ENCODE measurements at regions of chr6 and their contacts with region 1.

Region 1: DNA sequence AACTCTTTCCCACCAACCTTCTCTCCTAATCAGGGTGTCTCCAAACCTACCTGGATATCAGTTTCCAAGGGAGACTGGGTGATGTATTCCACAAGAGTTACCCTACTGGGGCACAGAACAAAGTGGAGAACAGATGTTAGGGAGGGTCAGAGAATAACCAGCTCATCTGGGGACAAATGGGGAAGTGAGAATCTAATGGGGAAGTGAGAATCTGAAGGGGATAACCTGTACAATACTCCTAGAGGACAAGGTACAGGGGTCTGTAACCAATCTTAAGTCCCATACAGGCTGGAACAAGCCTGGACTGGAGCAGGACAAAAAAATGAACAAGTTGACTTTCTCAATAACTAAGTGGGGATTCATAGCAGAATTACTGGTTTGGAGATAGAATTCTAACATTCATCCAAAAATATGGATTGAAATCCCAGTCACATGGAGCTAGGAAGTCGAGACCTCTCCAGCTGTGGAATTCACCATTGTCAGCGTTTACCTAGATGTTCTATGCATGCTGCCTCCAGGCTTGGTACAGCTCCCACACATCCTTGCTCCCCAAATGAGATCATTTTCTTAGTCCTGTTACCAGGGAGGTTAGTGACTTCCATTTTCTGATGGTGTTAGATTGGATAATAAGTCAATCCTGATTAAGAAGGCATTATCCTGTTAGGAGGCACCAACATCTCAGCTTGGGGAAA is 214.8 kb upstream of the MOCS1 start:
- DNase-seq: peak; percentile 88
- ATAC-seq: peak; percentile 97
- H3K4me3 ChIP-seq: no peak overlapping the region
- H3K27ac ChIP-seq: peak overlapping the region; percentile 60
- H3K4me1 ChIP-seq: peaks cover 11% of the 10 kb centered on the region
- H3K27me3 ChIP-seq: no peaks in the 10 kb centered on the region
- CTCF ChIP-seq: no peak
- EP300 ChIP-seq: peak; percentile 94 to 100
- POLR2A ChIP-seq: no peak
- RAD21 ChIP-seq: no peak

Region 2: DNA sequence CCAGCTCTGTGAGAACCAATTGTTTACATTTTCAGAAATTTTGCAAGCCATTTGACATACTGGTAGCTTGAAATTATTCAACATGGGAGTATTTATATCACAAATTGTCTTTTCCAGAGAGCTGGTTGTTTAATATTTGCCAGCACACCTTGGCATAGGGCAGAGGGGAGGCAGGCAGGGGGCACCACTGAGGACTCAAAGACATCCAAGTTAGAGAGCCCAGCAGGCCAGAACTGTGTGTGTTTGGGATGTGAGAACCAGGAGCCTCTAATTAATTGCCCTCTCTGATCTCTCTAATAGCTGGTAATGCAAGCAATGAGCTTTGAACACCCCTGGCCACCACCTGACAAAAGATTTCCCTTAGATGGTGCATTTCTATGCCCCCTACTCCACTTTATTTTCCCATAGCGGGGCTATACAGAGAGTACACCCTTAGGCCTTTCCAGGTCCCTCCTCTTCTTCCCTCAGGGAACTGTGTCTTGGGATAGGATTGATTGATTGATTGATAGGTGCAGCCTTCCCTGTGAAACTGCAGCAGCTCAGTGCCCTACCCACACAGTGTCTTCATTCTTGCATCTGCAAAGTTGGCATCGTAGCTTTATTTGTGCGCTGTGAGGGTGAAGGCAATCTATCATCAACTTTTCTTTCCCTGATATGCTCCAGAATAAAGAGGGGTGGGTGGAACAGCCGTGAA is 243.9 kb before region 1 on chr6:
- CTCF ChIA-PET with region 1: no interaction called
- POLR2A ChIA-PET with region 1: no interaction called
- RAD21 ChIA-PET with region 1: no interaction called
- SMC1A ChIA-PET with region 1: no interaction called
- in situ Hi-C with region 1: no loop called
- intact Hi-C with region 1: no loop called
- DNase-seq: no peak
- ATAC-seq: no peak
- H3K4me3 ChIP-seq: no peak overlapping the region
- H3K27ac ChIP-seq: no peak overlapping the region
- H3K4me1 ChIP-seq: no peaks in the 10 kb centered on the region
- H3K27me3 ChIP-seq: peaks cover 0 to 1% of the 10 kb centered on the region in 2 experiments; a peak in 1 of 4 replicates
- CTCF ChIP-seq: no peak
- EP300 ChIP-seq: no peak
- POLR2A ChIP-seq: no peak
- RAD21 ChIP-seq: no peak

Region 3: GRCh38 chr6:39980839-39981580 is 168.0 kb before region 1 on chr6:
- CTCF ChIA-PET with region 1: interaction called, 9 read pairs
- POLR2A ChIA-PET with region 1: interaction called, 3 read pairs
- RAD21 ChIA-PET with region 1: interaction called, 11 read pairs
- SMC1A ChIA-PET with region 1: interaction called, 6 read pairs
- in situ Hi-C with region 1: no loop called
- intact Hi-C with region 1: no loop called
- DNase-seq: no peak
- ATAC-seq: peak; percentile 79
- H3K4me3 ChIP-seq: no peak overlapping the region
- H3K27ac ChIP-seq: no peak overlapping the region
- H3K4me1 ChIP-seq: no peaks in the 10 kb centered on the region
- H3K27me3 ChIP-seq: no peaks in the 10 kb centered on the region; a peak in 1 of 4 replicates
- CTCF ChIP-seq: peak; percentile 22 to 68 (median 30); a peak in 4 of 6 replicates
- EP300 ChIP-seq: no peak
- POLR2A ChIP-seq: no peak
- RAD21 ChIP-seq: peak; percentile 62

Region 4: GRCh38 chr6:40097590-40097989 is 51.4 kb before region 1 on chr6:
- CTCF ChIA-PET with region 1: no interaction called
- POLR2A ChIA-PET with region 1: no interaction called
- RAD21 ChIA-PET with region 1: interaction called, 3 read pairs
- SMC1A ChIA-PET with region 1: interaction called, 29 read pairs
- in situ Hi-C with region 1: no loop called
- intact Hi-C with region 1: no loop called
- DNase-seq: no peak
- ATAC-seq: no peak; the same call in 2 of the 3 replicates
- H3K4me3 ChIP-seq: no peak overlapping the region
- H3K27ac ChIP-seq: no peak overlapping the region
- H3K4me1 ChIP-seq: no peaks in the 10 kb centered on the region
- H3K27me3 ChIP-seq: no peaks in the 10 kb centered on the region
- CTCF ChIP-seq: no peak
- EP300 ChIP-seq: no peak
- POLR2A ChIP-seq: no peak
- RAD21 ChIP-seq: no peak

Region 5: DNA sequence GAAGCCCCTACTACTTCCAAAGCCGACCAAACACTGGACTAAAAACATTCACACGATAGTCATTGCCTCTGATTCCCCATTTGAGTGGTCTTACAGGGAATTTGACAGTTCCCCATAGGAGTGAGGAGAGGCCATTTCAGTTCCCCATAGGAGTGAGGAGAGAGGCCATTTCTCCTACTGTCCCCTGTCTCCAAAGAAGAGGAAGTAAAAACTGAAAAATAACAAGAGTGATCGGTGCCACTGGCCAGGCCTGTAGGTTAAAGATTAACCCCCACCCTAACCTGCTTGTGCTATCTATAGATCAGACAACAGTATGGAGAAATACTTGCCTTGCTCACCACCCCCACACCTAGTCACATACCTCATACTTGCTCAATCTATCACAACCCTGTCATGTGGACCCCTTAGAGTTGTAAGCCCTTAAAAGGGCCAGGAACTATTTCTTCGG is 10.7 kb before region 1 on chr6:
- CTCF ChIA-PET with region 1: interaction called, 26 read pairs
- POLR2A ChIA-PET with region 1: interaction called, 22 read pairs
- RAD21 ChIA-PET with region 1: interaction called, 58 read pairs
- SMC1A ChIA-PET with region 1: interaction called, 70 read pairs
- in situ Hi-C with region 1: no loop called
- intact Hi-C with region 1: no loop called
- DNase-seq: peak; percentile 27
- ATAC-seq: peak; percentile 82
- H3K4me3 ChIP-seq: no peak overlapping the region
- H3K27ac ChIP-seq: no peak overlapping the region
- H3K4me1 ChIP-seq: no peaks in the 10 kb centered on the region
- H3K27me3 ChIP-seq: no peaks in the 10 kb centered on the region
- CTCF ChIP-seq: no peak
- EP300 ChIP-seq: 0 out of 4 replicates have a peak, but pooled peaks of 1 of the 2 experiments have one; percentile 41
- POLR2A ChIP-seq: no peak
- RAD21 ChIP-seq: no peak

Region 6: DNA sequence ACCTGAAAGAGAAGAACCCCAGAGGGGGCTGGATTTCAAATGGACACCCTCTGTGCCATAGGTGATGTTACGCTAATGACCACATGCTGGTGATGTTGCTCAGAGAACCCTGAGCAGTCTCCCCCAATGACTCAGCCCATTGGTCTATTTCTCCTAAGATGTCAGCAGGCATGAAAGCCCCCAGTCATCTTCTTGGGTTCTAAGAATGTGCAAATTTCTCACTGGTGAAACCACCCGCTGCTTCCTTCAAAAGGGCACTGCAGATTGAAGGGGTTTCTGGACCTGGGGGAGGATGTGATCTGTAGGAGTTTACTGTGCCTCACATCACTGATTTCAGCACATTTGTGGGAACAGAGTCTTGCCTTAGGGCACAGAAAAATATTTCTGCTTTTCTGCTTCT is 83.7 kb after region 1 on chr6:
- CTCF ChIA-PET with region 1: no interaction called
- POLR2A ChIA-PET with region 1: interaction called, 3 read pairs
- RAD21 ChIA-PET with region 1: interaction called, 4 read pairs
- SMC1A ChIA-PET with region 1: interaction called, 12 read pairs
- in situ Hi-C with region 1: no loop called
- intact Hi-C with region 1: no loop called
- DNase-seq: no peak
- ATAC-seq: peak; percentile 93
- H3K4me3 ChIP-seq: no peak overlapping the region
- H3K27ac ChIP-seq: no peak overlapping the region
- H3K4me1 ChIP-seq: no peaks in the 10 kb centered on the region
- H3K27me3 ChIP-seq: no peaks in the 10 kb centered on the region
- CTCF ChIP-seq: peak in 1 of 3 experiments; percentile 17; a peak in 1 of 6 replicates
- EP300 ChIP-seq: peak in 1 of 2 experiments; percentile 27; a peak in 2 of 4 replicates
- POLR2A ChIP-seq: no peak
- RAD21 ChIP-seq: no peak